Activated CD8-positive, alpha-beta T cell treated with anti-CD3 and anti-CD28 coated beads for 36 hours (primary cell): ENCODE measurements at regions of chr17 and their contacts with region 1.

Region 1: GRCh38 chr17:72725433-72726068 is 366.9 kb downstream of the SLC39A11 start:
- DNase-seq: peak; percentile 65
- ATAC-seq: peak; percentile 52
- H3K4me3 Mint-ChIP-seq: no peak overlapping the region
- H3K27ac Mint-ChIP-seq: no peak overlapping the region
- H3K4me1 Mint-ChIP-seq: peaks cover 27% of the 10 kb centered on the region
- H3K27me3 Mint-ChIP-seq: no peaks in the 10 kb centered on the region
- CTCF ChIP-seq: peak; percentile 91

Region 2: GRCh38 chr17:72562615-72563188 is 162.8 kb before region 1 on chr17:
- CTCF ChIA-PET with region 1: interaction called, 109 read pairs
- POLR2A ChIA-PET with region 1: no interaction called
- intact Hi-C with region 1: loop called (anchors 5 kb)
- DNase-seq: no peak
- ATAC-seq: no peak
- H3K4me3 Mint-ChIP-seq: no peak overlapping the region
- H3K27ac Mint-ChIP-seq: no peak overlapping the region
- H3K4me1 Mint-ChIP-seq: peaks cover 5% of the 10 kb centered on the region
- H3K27me3 Mint-ChIP-seq: no peaks in the 10 kb centered on the region
- CTCF ChIP-seq: no peak

Region 3: GRCh38 chr17:72985881-72986720 is 260.6 kb after region 1 on chr17:
- CTCF ChIA-PET with region 1: interaction called, 14 read pairs
- POLR2A ChIA-PET with region 1: no interaction called
- intact Hi-C with region 1: loop called (anchors 10 kb)
- DNase-seq: peak; percentile 68
- ATAC-seq: peak; percentile 77
- H3K4me3 Mint-ChIP-seq: no peak overlapping the region
- H3K27ac Mint-ChIP-seq: no peak overlapping the region
- H3K4me1 Mint-ChIP-seq: peaks cover 2% of the 10 kb centered on the region
- H3K27me3 Mint-ChIP-seq: no peaks in the 10 kb centered on the region
- CTCF ChIP-seq: peak; percentile 76

Region 4: DNA sequence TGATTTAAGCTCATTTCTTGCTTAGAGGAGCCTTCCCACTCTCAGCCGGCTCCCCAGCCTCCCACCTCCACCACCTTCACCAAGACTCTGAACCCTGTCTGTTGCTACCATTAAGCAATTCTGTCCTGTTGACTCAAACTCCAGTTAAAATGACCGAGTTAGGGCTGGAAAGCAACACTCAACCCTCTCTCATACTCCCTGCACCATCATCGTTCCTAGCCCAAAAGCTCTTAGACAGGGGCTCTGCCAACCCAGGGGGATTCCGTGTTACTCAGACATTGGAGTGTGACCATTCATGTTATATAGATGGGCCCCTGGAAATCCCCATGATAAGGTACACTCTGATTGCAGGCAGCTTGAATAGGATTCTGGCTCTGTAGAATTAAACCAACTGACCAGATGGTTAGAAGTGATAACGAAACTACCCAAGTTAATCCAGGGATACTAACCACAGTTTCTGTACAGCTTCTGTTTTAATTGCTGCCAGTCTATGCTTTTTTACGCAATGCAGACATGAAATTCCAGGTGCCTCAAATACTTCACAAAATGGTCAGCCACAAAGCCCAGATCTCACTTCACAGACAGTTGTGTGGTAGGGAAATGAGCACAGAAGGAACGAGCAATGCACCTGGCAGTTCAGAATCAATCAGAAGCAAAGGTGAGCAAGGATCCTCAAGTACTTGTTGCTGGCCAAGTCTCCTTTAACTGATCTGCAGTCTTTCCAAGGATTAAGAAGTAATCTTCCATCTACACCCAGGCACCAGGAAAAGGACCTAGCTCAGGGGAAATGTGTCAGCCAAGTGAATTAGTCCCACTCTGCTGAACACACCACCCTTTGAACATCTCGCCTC is 441.4 kb after region 1 on chr17:
- CTCF ChIA-PET with region 1: interaction called, 26 read pairs
- POLR2A ChIA-PET with region 1: no interaction called
- intact Hi-C with region 1: no loop called
- DNase-seq: peak; percentile 52
- ATAC-seq: peak; percentile 79
- H3K4me3 Mint-ChIP-seq: peak overlapping the region; percentile 29
- H3K27ac Mint-ChIP-seq: no peak overlapping the region
- H3K4me1 Mint-ChIP-seq: peaks cover 26% of the 10 kb centered on the region
- H3K27me3 Mint-ChIP-seq: peaks cover 66% of the 10 kb centered on the region
- CTCF ChIP-seq: no peak

Region 5: DNA sequence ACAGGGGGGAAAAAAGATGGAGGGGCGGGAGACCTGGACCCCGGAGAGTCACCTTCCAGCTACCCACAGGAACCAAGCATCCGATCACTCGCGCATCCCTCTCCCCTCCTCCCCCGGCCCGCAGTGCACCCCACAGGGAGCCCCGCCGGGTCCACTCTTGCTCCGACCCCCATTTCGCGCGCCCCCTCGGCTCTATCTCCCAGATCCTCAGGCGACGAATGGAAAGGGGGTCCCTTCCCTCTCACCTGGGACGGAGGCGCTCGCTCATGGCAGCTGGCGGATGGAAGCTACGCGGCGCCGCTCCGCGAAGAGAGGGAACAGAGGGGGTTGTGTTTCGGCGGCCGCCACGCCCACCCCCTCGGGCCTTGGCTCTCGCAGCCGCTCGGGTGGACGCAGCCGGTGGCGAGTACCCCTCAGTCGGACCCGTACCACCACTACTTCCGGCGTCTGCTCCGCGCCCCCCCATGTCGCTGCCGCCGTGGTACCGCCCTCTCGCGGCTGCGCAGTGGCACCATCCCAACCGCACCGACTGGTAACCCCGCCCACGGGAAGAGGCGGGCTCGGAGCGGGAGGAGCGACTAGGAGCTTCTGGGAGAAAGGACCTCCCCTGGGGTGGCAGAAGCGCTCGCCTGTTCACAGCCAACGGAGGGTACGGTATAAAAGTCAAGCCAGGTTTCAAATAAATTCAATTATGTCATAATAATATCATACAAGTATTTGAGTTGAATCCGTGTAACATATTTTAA is 506.5 kb after region 1 on chr17:
- CTCF ChIA-PET with region 1: interaction called, 13 read pairs
- POLR2A ChIA-PET with region 1: no interaction called
- intact Hi-C with region 1: no loop called
- DNase-seq: peak; percentile 98
- ATAC-seq: peak; percentile 95
- H3K4me3 Mint-ChIP-seq: peak overlapping the region; percentile 93
- H3K27ac Mint-ChIP-seq: peak overlapping the region; percentile 97
- H3K4me1 Mint-ChIP-seq: peaks cover 58% of the 10 kb centered on the region
- H3K27me3 Mint-ChIP-seq: no peaks in the 10 kb centered on the region
- CTCF ChIP-seq: no peak

Region 6: GRCh38 chr17:73371285-73371684 is 645.7 kb after region 1 on chr17:
- CTCF ChIA-PET with region 1: interaction called, 67 read pairs
- POLR2A ChIA-PET with region 1: no interaction called
- intact Hi-C with region 1: no loop called
- DNase-seq: no peak
- ATAC-seq: no peak
- H3K4me3 Mint-ChIP-seq: no peak overlapping the region
- H3K27ac Mint-ChIP-seq: no peak overlapping the region
- H3K4me1 Mint-ChIP-seq: no peaks in the 10 kb centered on the region
- H3K27me3 Mint-ChIP-seq: no peaks in the 10 kb centered on the region
- CTCF ChIP-seq: no peak